Activated CD4-positive, alpha-beta memory T cell treated with anti-CD3 and anti-CD28 coated beads for 36 hours (primary cell): ENCODE measurements at regions of chr2 and their contacts with region 1.

Region 1: DNA sequence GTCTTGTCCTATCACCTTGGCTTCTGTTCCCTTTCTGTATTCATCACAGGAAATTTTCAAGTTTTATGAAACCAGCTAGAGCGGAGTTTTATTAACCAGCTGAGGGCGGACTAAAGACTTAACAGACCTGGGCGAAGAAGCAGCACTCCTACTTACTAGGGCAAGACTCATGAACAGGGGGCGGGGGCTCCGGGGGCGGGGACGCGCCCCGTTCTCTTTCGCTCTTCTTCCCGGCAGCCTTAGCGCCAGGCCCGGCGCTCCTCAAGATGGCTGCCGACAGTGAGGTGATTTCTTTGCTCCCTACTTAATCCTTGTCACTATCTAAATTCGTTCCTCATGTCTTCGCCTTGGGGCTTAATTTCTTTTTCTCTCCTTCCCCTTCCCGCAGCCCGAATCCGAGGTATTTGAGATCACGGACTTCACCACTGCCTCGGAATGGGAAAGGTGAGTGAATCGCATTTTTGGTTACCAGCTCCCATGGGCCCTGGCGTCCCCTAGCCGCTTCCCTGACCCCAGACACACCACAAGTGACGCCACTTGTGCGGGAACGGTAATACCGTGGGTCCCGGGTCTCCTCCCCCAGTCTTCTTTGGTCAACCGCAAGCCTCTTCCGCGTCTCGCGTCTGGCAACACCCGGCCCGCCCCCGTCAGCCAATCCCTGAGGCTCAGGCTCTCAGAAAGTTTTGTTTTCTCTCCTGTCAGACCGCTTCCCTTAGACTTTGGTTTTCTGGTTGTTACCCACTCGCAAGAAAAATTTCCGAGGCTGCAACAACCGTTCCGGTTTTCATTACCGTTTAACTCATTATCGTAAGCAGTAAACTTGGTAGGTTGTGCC is at the start of gene RAB3GAP1:
- DNase-seq: peak; percentile 97
- H3K4me3 Mint-ChIP-seq: peak within 1 kb of the TSS; percentile 98
- H3K27ac Mint-ChIP-seq: peak within 1 kb of the TSS; percentile 100
- H3K4me1 Mint-ChIP-seq: peaks cover 39% of the 10 kb centered on the region
- H3K27me3 Mint-ChIP-seq: no peaks in the 10 kb centered on the region
- total RNA-seq, gene RAB3GAP1: 29.6 to 30.7 TPM

Region 2: GRCh38 chr2:134218930-134219658 is 833.2 kb before region 1 on chr2:
- CTCF ChIA-PET with region 1: no interaction called
- POLR2A ChIA-PET with region 1: no interaction called
- intact Hi-C with region 1: loop called (anchors 5 kb)
- DNase-seq: peak; percentile 56
- H3K4me3 Mint-ChIP-seq: peak overlapping the region; percentile 49
- H3K27ac Mint-ChIP-seq: peak overlapping the region; percentile 74
- H3K4me1 Mint-ChIP-seq: peaks cover 67% of the 10 kb centered on the region
- H3K27me3 Mint-ChIP-seq: no peaks in the 10 kb centered on the region

Region 3: DNA sequence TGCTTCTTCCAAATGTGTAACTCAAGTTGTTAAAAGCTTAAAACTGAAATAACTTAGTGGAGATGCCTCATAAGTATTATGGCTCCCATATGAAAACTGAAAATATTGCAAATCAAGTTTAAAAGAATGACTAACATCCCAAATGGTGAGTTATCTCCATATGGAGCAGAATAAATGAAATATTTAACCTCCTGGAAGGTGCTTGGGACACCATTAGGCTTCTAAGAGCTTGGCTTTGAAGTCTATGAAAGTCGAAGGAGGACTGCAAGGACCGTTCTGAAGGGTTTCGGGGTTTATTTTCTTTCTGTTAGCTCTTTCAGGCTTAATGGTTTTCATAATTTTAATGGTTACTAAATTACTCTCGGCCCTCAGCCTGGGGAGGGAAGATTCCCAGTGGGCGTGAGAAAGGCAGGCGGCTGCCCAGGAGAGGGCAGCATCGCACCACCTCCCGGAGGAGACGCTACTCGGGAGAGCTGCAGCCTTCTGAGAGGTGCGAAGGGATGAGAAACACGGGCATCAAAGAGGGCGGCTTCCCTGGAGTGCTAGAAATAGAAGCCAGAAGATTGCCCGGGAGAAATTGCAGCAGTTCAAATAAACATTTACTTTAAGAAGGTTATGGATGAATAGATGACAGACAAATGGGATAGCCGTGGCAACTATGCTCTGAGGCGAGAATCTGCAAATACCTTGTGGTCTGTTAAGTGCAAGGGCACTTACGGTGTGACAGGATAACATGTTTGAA is 48.1 kb before region 1 on chr2:
- CTCF ChIA-PET with region 1: interaction called, 23 read pairs
- POLR2A ChIA-PET with region 1: no interaction called
- intact Hi-C with region 1: loop called (anchors 2 kb)
- DNase-seq: peak; percentile 82
- H3K4me3 Mint-ChIP-seq: no peak overlapping the region
- H3K27ac Mint-ChIP-seq: no peak overlapping the region
- H3K4me1 Mint-ChIP-seq: peaks cover 4% of the 10 kb centered on the region
- H3K27me3 Mint-ChIP-seq: peaks cover 25% of the 10 kb centered on the region

Region 4: DNA sequence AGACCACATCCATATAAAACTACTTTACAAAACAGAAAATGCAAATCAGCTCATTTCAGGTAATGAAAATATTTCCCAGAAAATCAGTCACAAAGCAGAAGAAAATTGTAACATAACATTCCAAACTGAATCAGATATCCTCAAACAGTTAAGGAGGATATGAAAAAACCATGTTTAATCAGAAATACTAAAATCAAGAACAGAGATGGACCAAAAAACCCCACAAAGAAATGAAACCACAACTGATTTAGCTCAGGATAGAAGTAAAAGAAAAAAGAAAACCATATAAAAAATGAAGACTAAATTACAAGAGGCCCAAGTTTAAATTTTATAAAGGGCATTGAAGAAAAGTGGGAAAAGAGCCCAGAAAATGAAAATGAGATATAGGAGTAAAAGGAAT is 102.7 kb after region 1 on chr2:
- CTCF ChIA-PET with region 1: no interaction called
- POLR2A ChIA-PET with region 1: no interaction called
- intact Hi-C with region 1: loop called (anchors 5 kb)
- DNase-seq: no peak
- H3K4me3 Mint-ChIP-seq: no peak overlapping the region
- H3K27ac Mint-ChIP-seq: no peak overlapping the region
- H3K4me1 Mint-ChIP-seq: peaks cover 21% of the 10 kb centered on the region
- H3K27me3 Mint-ChIP-seq: no peaks in the 10 kb centered on the region

Region 5: DNA sequence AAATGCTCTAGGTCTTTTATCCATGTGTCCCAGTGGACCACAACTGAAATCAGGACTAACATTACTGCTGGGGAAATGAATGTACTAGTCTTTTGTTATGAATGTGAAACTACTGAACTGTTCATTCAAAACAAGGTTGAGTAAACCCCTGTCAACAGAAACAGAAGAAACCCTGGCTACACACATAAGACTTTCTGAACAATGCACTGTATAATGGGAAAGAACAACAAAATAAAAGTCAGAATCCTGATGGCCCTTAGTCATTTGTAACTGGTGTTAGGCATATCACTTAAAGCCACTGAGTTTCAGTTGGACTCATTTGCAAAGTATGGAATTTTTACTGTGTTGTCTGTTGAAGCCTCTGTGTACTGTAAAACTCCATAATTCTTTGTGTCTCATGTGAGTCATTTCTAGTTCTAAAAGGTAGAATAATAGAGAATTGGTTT is 612.4 kb after region 1 on chr2:
- CTCF ChIA-PET with region 1: no interaction called
- POLR2A ChIA-PET with region 1: interaction called, 3 read pairs
- intact Hi-C with region 1: loop called (anchors 2 kb)
- DNase-seq: no peak
- H3K4me3 Mint-ChIP-seq: no peak overlapping the region
- H3K27ac Mint-ChIP-seq: peak overlapping the region; percentile 14
- H3K4me1 Mint-ChIP-seq: peaks cover 20% of the 10 kb centered on the region
- H3K27me3 Mint-ChIP-seq: no peaks in the 10 kb centered on the region

Region 6: DNA sequence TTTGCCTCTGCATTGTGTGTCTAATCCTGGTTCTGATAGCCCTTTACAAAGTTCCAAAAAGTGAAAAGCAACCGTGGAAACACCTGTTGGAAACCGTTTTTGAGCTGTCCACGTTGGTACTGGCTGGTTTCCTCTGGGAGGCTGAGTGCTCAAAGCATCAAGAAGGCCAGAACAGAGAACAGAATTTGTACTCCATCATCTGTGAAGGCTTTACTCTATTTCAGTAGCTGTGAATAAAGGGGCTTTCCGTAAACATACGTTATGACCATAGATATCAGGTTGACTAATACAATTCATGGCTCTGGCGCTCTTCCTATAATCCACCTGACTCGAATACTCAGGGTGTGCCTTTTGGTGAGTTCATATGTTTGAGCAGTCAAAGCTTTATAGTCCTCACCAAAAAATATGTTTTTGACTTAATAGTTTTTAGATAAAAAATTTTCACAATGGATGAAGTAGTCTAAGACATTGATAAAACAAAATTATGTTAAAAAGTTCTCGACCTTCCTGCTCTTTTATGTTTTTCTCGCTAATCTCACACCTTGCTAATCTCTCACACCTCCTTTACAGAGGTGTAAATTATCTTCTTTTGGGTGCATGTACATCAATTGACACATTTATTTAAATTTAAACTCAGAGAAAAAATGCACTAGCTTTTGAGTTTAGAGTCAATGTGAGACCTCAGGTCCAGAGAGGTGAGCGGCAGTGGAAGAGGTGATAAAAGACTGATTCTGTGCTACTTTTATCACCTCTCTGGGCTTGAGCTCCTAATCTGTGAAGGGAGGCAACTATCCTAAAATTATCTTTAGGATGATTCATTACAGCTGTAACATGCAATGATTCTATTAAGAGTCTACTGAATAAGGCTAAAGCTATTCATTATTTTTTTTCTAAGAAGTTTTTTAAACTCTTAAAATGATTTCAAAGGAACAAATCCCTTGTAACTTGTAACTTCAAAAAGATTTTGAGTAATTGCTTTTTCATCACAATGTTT is 1000.4 kb after region 1 on chr2:
- CTCF ChIA-PET with region 1: no interaction called
- POLR2A ChIA-PET with region 1: no interaction called
- intact Hi-C with region 1: loop called (anchors 5 kb)
- DNase-seq: peak; percentile 35
- H3K4me3 Mint-ChIP-seq: peak overlapping the region; percentile 57
- H3K27ac Mint-ChIP-seq: peak overlapping the region; percentile 99
- H3K4me1 Mint-ChIP-seq: peaks cover 86% of the 10 kb centered on the region
- H3K27me3 Mint-ChIP-seq: no peaks in the 10 kb centered on the region